PC-3 (cell line): ENCODE measurements at regions of chr7 and their contacts with region 1.

Region 1: DNA sequence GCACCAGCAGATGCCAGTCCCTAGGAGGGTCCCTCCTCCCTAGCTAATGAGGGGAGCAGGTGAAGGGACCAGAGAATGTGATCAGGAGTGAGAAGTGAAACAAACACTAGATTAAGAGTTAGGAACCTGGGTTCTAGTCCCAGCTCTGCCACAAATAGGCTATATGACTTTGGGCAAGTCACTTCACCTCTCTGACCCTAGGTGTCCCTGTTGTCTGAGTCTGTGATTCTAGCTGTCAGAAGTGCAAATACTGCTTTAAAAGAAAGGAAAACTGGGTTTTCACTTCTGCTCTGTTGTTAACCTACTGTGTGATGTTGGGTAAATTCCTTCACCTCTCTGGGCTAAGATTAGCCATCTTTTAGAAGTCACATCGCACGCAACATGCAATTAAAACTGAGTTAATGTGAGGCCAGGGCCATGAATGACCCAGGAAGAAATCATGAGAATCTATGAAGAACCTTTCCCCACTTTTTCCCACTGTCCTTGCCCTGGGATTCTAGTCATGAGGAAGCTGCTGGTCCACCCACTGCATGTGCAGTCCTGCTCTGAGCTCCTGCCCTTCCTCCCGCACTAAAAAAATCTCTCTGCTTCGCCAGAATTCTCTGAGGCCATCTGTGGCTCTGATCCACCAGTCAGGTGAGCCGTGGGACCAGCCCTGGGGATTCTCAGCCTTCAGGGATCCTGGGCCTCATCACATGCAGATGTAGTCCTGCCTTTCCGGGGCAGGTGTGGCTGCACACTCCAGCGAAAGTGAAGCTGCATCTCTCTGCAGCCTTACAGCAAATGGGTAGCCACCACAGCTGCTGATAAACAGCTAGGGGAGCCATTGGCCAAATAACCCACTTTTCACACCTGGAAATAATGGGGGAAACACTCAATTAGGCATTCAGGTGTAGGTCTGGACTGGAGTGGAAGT is 181.7 kb downstream of the PLXNA4 start:
- DNase-seq: peak; percentile 29
- ATAC-seq: no peak
- H3K4me3 ChIP-seq: no peak overlapping the region
- H3K27ac ChIP-seq: no peak overlapping the region
- H3K4me1 ChIP-seq: peaks cover 14% of the 10 kb centered on the region
- H3K27me3 ChIP-seq: no peaks in the 10 kb centered on the region
- CTCF ChIP-seq: peak; percentile 53

Region 2: DNA sequence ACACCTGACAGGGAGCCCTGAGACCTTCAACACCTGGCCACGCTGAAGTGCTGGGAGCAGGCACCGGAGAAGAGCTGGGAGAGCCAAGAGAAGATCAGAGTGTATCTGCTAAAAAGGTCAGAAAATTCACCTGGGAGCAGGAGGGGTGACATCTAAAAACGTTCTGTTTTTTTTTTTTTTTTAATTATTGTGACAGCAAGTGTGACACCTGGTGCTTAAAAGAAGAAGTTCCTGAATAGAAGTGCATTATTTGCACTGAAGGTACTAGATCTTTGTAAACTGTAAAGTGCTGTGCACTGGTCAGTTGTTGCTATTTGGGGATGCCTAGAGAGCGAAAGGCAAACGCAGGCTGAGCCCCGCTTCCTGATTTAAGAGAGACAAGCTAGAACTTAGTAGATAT is 240.3 kb before region 1 on chr7:
- CTCF ChIA-PET with region 1: no interaction called
- POLR2A ChIA-PET with region 1: interaction called, 10 read pairs
- intact Hi-C with region 1: no loop called
- DNase-seq: peak; percentile 8
- ATAC-seq: no peak
- H3K4me3 ChIP-seq: no peak overlapping the region
- H3K27ac ChIP-seq: no peak overlapping the region
- H3K4me1 ChIP-seq: no peaks in the 10 kb centered on the region
- H3K27me3 ChIP-seq: no peaks in the 10 kb centered on the region
- CTCF ChIP-seq: peak; percentile 50; the same call in 1 of the 2 replicates

Region 3: DNA sequence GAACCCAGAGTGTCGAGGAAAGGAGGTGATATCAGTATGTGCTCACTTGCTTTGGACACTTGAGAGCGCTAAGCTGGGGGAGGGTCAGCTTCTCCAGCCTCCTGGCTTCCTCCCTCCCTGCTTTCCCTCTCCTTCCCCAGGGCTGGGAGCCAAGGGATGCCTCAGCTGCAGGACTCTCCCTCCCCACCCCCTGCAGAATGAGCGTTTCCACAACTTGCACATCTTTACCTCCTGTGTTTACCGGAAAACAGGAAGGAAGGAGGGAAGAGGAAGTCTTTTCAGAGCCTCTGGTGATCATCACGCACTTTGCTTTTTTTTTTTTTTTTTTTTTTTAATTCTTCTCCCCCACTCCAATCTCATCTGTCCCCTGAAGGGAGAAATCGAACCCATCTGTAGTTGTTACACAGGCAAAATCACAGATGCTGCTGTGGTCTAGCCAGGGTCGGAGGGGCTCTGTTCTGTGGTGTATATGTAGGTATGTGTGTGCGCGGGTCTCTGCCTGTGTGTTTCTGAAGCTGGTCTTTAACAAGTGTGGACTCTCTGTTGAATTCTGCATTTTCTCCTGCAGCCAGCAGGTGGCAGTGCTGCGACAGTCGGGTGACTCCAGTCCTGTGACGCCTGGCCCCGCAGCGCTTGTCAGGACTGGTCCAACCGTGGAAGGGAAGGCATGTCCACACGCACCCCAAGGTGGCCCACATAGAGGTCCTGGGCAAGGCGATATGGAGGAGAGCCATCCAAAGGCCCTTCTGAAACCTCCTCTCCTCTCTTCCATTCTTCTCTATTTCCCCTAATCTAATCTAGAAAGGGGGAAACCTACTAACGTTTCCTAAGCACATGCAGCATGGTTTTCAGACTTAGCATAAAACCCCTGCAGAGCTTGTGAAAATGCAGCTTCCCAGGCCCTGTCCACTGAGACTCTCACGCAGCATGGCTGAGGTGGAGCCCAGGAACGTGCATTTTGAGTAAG is 75.9 kb before region 1 on chr7:
- CTCF ChIA-PET with region 1: no interaction called
- POLR2A ChIA-PET with region 1: no interaction called
- intact Hi-C with region 1: loop called (anchors 2 kb)
- DNase-seq: peak; percentile 79
- ATAC-seq: peak; percentile 94
- H3K4me3 ChIP-seq: peak overlapping the region; percentile 11; the same call in 1 of the 2 replicates
- H3K27ac ChIP-seq: no peak overlapping the region
- H3K4me1 ChIP-seq: peaks cover 5% of the 10 kb centered on the region; the same call in 1 of the 2 replicates
- H3K27me3 ChIP-seq: no peaks in the 10 kb centered on the region
- CTCF ChIP-seq: peak; percentile 89

Region 4: GRCh38 chr7:132354527-132354926 is 40.0 kb before region 1 on chr7:
- CTCF ChIA-PET with region 1: no interaction called
- POLR2A ChIA-PET with region 1: no interaction called
- intact Hi-C with region 1: loop called (anchors 1 kb)
- DNase-seq: no peak
- ATAC-seq: no peak
- H3K4me3 ChIP-seq: no peak overlapping the region
- H3K27ac ChIP-seq: no peak overlapping the region
- H3K4me1 ChIP-seq: peaks cover 8% of the 10 kb centered on the region; the same call in 1 of the 2 replicates
- H3K27me3 ChIP-seq: peaks cover 14% of the 10 kb centered on the region; the same call in 1 of the 2 replicates
- CTCF ChIP-seq: no peak

Region 5: DNA sequence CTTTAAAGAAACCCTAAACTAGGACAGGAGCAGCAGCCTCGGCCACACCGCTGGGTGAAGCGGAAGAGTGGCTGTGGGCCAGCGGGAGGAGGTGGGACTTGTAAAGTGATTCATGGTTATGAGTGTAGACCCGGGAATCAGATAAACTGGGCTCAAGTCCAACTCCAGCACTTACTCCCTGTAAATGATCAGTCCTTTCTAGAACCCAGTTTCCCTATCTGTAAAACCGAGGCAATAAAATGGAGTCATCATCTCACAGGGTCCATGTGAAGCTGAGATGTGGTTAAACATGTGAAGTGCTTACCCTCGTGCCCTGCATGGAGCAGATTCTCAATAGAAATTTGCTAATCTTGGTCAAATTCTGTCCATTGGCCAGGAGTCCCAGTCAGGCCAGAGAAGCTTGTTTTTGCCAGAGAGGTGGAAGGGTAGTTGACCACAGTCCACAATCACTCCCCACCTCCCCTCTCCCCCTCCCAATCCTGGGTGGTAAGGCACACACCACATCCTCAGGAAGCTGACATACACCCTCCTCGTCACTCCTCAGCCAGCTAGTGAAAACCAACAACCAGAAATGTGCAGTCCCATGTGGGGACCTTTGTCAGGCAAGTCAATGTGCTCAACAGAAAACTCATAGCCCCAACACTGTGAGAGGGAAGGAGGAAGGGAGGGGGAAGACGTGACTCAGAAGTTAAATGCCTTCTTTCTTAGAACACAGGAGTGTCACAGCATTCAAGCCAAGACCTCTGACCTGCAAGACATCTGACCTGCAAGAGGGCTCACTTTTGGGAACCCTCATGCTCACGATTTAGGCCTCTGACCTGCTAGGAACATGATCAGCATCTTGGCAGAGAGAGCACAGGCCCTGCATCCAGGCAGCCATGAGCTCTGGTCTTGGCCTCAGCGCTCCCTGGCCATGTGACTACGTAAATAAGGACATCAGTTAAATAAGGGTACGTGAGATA is 36.6 kb after region 1 on chr7:
- CTCF ChIA-PET with region 1: no interaction called
- POLR2A ChIA-PET with region 1: no interaction called
- intact Hi-C with region 1: loop called (anchors 5 kb)
- DNase-seq: peak; percentile 94
- ATAC-seq: peak; percentile 84
- H3K4me3 ChIP-seq: peak overlapping the region; percentile 10; the same call in 1 of the 2 replicates
- H3K27ac ChIP-seq: peak overlapping the region; percentile 97
- H3K4me1 ChIP-seq: peaks cover 28% of the 10 kb centered on the region
- H3K27me3 ChIP-seq: no peaks in the 10 kb centered on the region
- CTCF ChIP-seq: no peak

Region 6: DNA sequence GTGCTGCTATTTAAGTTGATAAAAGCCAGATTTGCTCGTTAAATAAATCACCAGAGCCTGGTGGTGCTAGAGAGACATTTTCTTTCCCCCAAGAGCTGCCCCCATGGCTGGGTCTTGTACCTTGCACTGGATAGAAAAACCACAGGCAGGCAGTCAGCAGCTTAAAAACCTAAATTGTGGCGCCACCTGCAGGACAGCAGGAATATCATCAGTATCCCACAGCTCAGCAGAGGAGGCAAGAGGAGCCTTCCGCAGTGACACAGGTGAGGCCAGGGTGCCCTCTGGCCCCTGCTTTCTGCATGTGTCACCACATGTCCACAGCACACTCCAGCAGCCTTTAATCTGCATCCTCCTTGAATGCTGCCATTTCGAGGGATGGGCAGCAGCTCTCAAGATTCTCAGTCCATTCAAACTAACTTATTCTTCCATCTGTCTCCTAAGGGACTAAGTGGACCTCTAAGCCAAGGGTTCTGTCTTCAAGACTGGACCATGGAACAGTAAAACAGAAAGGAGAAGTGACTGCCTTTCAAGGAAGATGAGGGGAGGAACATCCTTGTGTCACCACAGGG is 186.3 kb after region 1 on chr7:
- CTCF ChIA-PET with region 1: interaction called, 4 read pairs
- POLR2A ChIA-PET with region 1: no interaction called
- intact Hi-C with region 1: loop called (anchors 1 kb)
- DNase-seq: peak; percentile 71
- ATAC-seq: peak; percentile 77
- H3K4me3 ChIP-seq: no peak overlapping the region
- H3K27ac ChIP-seq: no peak overlapping the region
- H3K4me1 ChIP-seq: peaks cover 4% of the 10 kb centered on the region; the same call in 1 of the 2 replicates
- H3K27me3 ChIP-seq: peaks cover 20% of the 10 kb centered on the region
- CTCF ChIP-seq: peak; percentile 87